ENCODE measurements at regions of chr6 and their contacts with region 1.

Region 1: GRCh38 chr6:109095027-109095834 is at the start of gene CEP57L1:
- DNase-seq: peak; percentile 89 to 98 (median 95)
- ATAC-seq: peak; percentile 78
- H3K4me3 ChIP-seq: peak within 1 kb of the TSS; percentile 74
- H3K4me3 Mint-ChIP-seq: peak within 1 kb of the TSS; percentile 96
- H3K27ac ChIP-seq: peak within 1 kb of the TSS; percentile 91 to 95
- H3K27ac Mint-ChIP-seq: peak within 1 kb of the TSS; percentile 99
- H3K4me1 ChIP-seq: peaks cover 31% of the 10 kb centered on the region
- H3K4me1 Mint-ChIP-seq: peaks cover 49% of the 10 kb centered on the region
- H3K27me3 ChIP-seq: no peaks in the 10 kb centered on the region
- H3K27me3 Mint-ChIP-seq: no peaks in the 10 kb centered on the region
- CTCF ChIP-seq: no peak
- total RNA-seq, gene CEP57L1: 2.9 to 3.7 TPM

Region 2: DNA sequence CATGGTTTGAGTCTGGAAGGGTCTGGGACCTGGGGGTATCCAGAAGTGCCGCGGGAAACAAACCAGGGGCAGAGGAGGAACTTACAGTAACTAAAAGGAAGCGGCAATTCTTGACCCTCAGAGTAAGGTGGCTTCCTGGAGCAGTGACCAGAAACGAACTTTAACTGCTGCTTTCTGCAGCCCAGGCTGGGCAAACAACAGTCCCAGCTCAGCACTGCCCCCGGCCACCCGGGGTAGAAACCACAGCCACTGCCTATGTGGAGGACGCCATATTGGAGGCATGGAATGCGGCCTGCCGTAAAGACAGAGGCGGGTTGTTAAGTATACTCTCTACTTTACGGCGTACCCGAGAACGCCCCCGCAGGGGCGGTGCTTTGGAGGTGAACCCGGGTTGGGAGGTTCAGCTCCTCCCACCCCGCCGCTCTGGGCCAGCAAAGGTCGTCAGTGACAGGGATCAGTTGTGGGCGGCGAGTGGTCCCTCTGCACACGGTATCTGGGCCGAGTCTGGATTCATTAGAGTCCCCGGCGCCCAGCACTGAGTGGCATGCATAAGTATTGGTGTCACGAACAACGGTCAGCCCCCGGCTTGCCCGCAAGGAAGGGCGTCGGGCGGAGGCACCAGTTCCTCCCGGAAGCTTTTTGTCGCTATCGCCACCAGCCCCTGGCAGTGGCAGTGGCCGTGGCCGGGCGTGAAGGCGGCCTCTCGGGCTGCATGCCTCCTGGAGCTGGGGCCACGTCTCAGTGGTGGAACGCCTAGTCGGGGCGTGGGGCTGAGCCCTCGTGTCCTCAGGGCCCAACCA is 1635.7 kb before region 1 on chr6 and contains the start of gene PDSS2:
- CTCF ChIA-PET with region 1: no interaction called
- POLR2A ChIA-PET with region 1: interaction called, 3 read pairs
- intact Hi-C with region 1: loop called (anchors 2 to 5 kb)
- DNase-seq: peak; percentile 93 to 99 (median 96)
- ATAC-seq: peak; percentile 96
- H3K4me3 ChIP-seq: peak within 1 kb of the TSS; percentile 93 to 94
- H3K4me3 Mint-ChIP-seq: peak within 1 kb of the TSS; percentile 98
- H3K27ac ChIP-seq: peak within 1 kb of the TSS; percentile 69 to 82
- H3K27ac Mint-ChIP-seq: peak within 1 kb of the TSS; percentile 98
- H3K4me1 ChIP-seq: peaks cover 14% of the 10 kb centered on the region
- H3K4me1 Mint-ChIP-seq: peaks cover 31% of the 10 kb centered on the region
- H3K27me3 ChIP-seq: no peaks in the 10 kb centered on the region
- H3K27me3 Mint-ChIP-seq: no peaks in the 10 kb centered on the region
- CTCF ChIP-seq: peak; percentile 28
- total RNA-seq, gene PDSS2: 3.7 to 4.7 TPM

Region 3: GRCh38 chr6:108074359-108075144 is 1020.7 kb before region 1 on chr6 and contains the start of gene OSTM1:
- CTCF ChIA-PET with region 1: no interaction called
- POLR2A ChIA-PET with region 1: no interaction called
- intact Hi-C with region 1: loop called (anchors 1 to 2 kb)
- DNase-seq: peak; percentile 89 to 97 (median 94)
- ATAC-seq: peak; percentile 96
- H3K4me3 ChIP-seq: peak within 1 kb of the TSS; percentile 98 to 99
- H3K4me3 Mint-ChIP-seq: peak within 1 kb of the TSS; percentile 89
- H3K27ac ChIP-seq: peak within 1 kb of the TSS; percentile 85 to 88
- H3K27ac Mint-ChIP-seq: peak within 1 kb of the TSS; percentile 88
- H3K4me1 ChIP-seq: peaks cover 19% of the 10 kb centered on the region
- H3K4me1 Mint-ChIP-seq: peaks cover 29% of the 10 kb centered on the region
- H3K27me3 ChIP-seq: no peaks in the 10 kb centered on the region
- H3K27me3 Mint-ChIP-seq: peaks cover 2% of the 10 kb centered on the region
- CTCF ChIP-seq: no peak
- total RNA-seq, gene OSTM1: 20.0 to 25.0 TPM

Region 4: DNA sequence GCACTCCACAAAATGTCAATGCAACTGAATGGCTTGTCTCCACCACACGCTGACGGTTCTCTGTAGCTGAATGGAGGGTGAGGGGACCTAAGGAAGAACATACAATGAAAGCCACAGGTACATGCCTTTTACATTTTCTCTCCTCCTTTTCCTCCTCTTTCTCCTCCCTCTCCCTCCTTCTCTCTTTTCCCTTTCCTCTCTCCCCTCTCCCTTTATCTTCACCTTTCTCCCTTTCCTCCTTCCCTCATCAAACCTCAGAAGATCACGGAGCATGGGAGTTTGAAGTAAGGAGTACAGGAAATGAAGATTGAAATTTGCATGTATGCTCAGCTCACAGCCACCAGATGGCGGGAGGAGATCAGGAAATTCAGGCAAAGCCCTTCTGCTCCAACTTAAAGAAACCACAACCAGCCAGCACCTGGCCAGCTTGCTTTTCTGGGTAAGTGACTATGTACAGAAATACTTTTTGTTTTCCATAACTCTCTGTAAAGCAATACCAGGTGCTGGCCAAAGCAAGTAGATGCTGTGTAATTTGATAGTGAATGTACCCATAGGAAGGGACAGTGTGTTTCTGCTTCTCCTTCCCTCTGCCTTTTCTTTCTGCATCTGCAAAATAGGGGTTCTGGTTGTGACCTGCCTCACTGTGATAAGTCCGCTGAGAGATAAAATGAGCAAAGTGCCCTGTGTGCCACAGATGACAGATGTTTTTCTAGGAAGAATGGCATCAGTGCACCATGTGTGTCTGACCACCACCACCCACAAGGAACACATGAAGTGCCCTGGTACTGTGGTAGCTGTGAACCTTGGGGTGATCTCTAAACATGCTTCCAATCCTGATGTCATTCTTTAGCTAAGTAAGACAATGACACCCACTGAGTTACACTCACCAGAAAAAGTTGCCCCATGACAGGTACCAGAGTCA is 553.1 kb before region 1 on chr6:
- CTCF ChIA-PET with region 1: interaction called, 5 read pairs
- POLR2A ChIA-PET with region 1: interaction called, 4 read pairs
- intact Hi-C with region 1: loop called in 1 of 2 experiments (anchors 5 kb)
- DNase-seq: peak; percentile 39 to 87 (median 69)
- ATAC-seq: peak; percentile 92
- H3K4me3 ChIP-seq: no peak overlapping the region
- H3K4me3 Mint-ChIP-seq: no peak overlapping the region
- H3K27ac ChIP-seq: no peak overlapping the region
- H3K27ac Mint-ChIP-seq: no peak overlapping the region
- H3K4me1 ChIP-seq: peaks cover 12% of the 10 kb centered on the region
- H3K4me1 Mint-ChIP-seq: peaks cover 16% of the 10 kb centered on the region
- H3K27me3 ChIP-seq: no peaks in the 10 kb centered on the region
- H3K27me3 Mint-ChIP-seq: no peaks in the 10 kb centered on the region
- CTCF ChIP-seq: peak; percentile 95

Region 5: GRCh38 chr6:109009236-109009961 is 85.8 kb before region 1 on chr6:
- CTCF ChIA-PET with region 1: no interaction called
- POLR2A ChIA-PET with region 1: interaction called, 8 read pairs
- intact Hi-C with region 1: loop called (anchors 1 to 2 kb)
- DNase-seq: peak; percentile 83 to 96 (median 93)
- ATAC-seq: peak; percentile 96
- H3K4me3 ChIP-seq: peak overlapping the region; percentile 72 to 94
- H3K4me3 Mint-ChIP-seq: peak overlapping the region; percentile 98
- H3K27ac ChIP-seq: peak overlapping the region; percentile 89 to 92
- H3K27ac Mint-ChIP-seq: peak overlapping the region; percentile 100
- H3K4me1 ChIP-seq: peaks cover 53% of the 10 kb centered on the region
- H3K4me1 Mint-ChIP-seq: peaks cover 71% of the 10 kb centered on the region
- H3K27me3 ChIP-seq: no peaks in the 10 kb centered on the region
- H3K27me3 Mint-ChIP-seq: no peaks in the 10 kb centered on the region
- CTCF ChIP-seq: no peak

Region 6: DNA sequence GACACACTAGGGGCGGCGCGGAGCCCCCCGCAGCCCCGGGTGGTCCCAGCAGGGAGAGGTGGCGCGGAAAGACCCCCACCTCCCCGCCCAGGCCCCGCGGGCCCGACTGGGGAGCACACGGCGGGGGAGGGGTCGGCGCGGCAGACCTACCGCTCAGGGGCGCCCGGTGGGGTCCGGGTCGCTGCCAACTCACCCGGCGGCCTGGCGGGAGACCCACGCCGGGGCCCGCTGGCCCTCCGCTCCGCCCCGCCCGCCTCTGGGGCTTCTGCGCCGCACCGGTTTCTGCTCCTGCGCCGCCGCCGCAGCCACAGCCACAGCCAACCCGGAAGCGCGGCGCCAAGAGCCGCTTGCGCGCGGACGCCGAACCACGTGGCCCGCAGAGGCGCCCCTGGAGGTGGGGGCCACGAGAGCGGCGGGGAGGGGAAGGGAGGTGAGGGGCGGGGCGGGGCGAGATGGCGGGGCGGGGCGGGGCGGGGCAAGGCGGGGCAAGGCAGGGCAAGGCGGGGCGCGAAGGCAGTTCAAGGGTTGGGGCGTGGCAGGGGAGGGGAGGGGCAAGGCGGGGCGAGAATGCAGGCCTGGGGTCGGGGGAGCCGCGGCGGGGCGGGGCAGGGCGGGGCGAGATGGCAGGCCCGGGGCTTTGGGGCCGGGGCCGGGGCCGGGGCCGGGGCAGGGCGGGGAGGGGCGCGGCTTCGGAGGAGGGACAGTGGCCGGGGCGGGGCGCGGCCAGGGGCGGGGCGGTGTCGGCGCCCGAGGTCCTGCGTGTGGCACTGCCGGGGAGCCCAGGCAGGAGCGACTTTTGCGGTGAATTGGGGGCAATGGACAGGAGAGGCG is 387.9 kb after region 1 on chr6 and contains the start of gene ZBTB24:
- CTCF ChIA-PET with region 1: no interaction called
- POLR2A ChIA-PET with region 1: no interaction called
- intact Hi-C with region 1: loop called (anchors 2 to 5 kb)
- DNase-seq: peak; percentile 75 to 96 (median 88)
- ATAC-seq: peak; percentile 85
- H3K4me3 ChIP-seq: peak within 1 kb of the TSS; percentile 65 to 69
- H3K4me3 Mint-ChIP-seq: peak within 1 kb of the TSS; percentile 95
- H3K27ac ChIP-seq: peak within 1 kb of the TSS; percentile 49 to 62
- H3K27ac Mint-ChIP-seq: peak within 1 kb of the TSS; percentile 89
- H3K4me1 ChIP-seq: peaks cover 37% of the 10 kb centered on the region
- H3K4me1 Mint-ChIP-seq: peaks cover 50% of the 10 kb centered on the region
- H3K27me3 ChIP-seq: no peaks in the 10 kb centered on the region
- H3K27me3 Mint-ChIP-seq: no peaks in the 10 kb centered on the region
- CTCF ChIP-seq: no peak
- total RNA-seq, gene ZBTB24: 10.9 to 11.2 TPM

Region 7: GRCh38 chr6:110815217-110816109 is 1720.2 kb after region 1 on chr6 and contains the start of gene CDK19:
- CTCF ChIA-PET with region 1: no interaction called
- POLR2A ChIA-PET with region 1: interaction called, 4 read pairs
- intact Hi-C with region 1: loop called in 1 of 2 experiments (anchors 10 kb)
- DNase-seq: peak; percentile 96 to 99 (median 98)
- ATAC-seq: peak; percentile 81
- H3K4me3 ChIP-seq: peak within 1 kb of the TSS; percentile 83 to 89
- H3K4me3 Mint-ChIP-seq: peak within 1 kb of the TSS; percentile 98
- H3K27ac ChIP-seq: peak within 1 kb of the TSS; percentile 88 to 95
- H3K27ac Mint-ChIP-seq: peak within 1 kb of the TSS; percentile 99
- H3K4me1 ChIP-seq: peaks cover 12% of the 10 kb centered on the region
- H3K4me1 Mint-ChIP-seq: peaks cover 23% of the 10 kb centered on the region
- H3K27me3 ChIP-seq: no peaks in the 10 kb centered on the region
- H3K27me3 Mint-ChIP-seq: no peaks in the 10 kb centered on the region
- CTCF ChIP-seq: no peak
- total RNA-seq, gene CDK19: 4.9 to 5.0 TPM